ENCODE measurements at regions of chr1 and their contacts with region 1.

Region 1: GRCh38 chr1:243850452-243851256 is 611 bp upstream of the AKT3 start:
- DNase-seq: peak; percentile 59 to 61
- H3K4me3 ChIP-seq: peak overlapping the region; percentile 64
- H3K4me3 Mint-ChIP-seq: peak overlapping the region; percentile 83
- H3K27ac Mint-ChIP-seq: no peak overlapping the region
- H3K4me1 ChIP-seq: 0 out of 2 replicates have a peak, but pooled peaks cover 10% of the 10 kb centered on the region
- H3K4me1 Mint-ChIP-seq: no peaks in the 10 kb centered on the region
- H3K27me3 ChIP-seq: peaks cover 2% of the 10 kb centered on the region
- H3K27me3 Mint-ChIP-seq: peaks cover 12% of the 10 kb centered on the region
- CTCF ChIP-seq: no peak

Region 2: DNA sequence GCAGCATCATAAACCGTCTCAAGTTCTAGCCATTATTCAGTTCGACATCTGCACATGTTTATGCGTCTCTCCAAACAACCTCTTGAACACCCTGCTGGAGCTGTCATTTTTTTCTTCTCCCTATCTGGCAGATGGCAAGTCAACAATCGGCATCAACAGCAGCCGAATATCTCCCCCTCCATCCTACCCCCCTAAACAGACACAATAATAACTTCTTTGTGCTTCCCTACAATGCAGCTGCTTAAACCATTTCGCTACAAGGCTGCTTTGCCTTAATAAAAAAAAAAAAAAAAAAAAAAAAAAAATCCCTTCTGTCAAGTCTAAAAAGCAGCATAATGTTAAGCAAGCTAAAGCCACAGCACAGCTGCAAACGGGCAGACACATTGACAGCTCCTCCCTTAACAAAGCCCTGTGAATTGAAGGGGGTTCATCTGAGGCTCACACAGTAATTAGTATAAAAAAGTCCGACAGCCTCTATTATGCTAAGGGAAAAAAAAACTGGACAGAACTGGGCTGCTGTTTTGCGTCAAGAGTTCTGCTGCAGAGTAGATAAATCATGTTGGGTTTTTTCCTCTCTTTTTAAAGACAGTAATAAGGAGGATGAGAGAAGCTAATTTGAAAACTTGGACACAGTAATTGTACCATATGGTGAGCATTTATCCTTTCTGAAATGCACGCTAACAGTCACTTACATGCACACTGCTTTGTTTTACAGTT is 137.0 kb before region 1 on chr1:
- CTCF ChIA-PET with region 1: no interaction called
- POLR2A ChIA-PET with region 1: no interaction called
- intact Hi-C with region 1: no loop called
- DNase-seq: no peak
- H3K4me3 ChIP-seq: no peak overlapping the region
- H3K4me3 Mint-ChIP-seq: no peak overlapping the region
- H3K27ac Mint-ChIP-seq: no peak overlapping the region
- H3K4me1 ChIP-seq: no peaks in the 10 kb centered on the region
- H3K4me1 Mint-ChIP-seq: no peaks in the 10 kb centered on the region
- H3K27me3 ChIP-seq: no peaks in the 10 kb centered on the region
- H3K27me3 Mint-ChIP-seq: no peaks in the 10 kb centered on the region
- CTCF ChIP-seq: no peak

Region 3: DNA sequence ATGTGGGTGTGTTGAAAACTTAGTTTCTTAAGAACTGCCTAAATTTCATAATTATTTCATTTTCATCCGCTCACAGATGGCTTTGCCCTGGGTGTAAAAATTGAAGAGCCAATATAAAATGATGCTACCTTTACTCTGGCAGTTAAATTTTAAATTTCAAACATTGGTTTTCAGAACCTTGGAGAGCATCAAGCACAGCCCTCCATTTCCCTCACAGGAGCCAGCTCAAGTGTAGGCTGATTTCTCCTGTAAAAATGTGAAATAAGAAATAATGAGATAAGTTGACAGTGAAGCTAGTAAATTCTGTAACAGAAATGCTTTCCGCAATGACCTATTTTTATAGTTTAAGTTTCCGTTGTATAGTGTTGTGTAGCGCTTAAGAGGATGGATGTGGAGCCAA is 53.2 kb after region 1 on chr1:
- CTCF ChIA-PET with region 1: no interaction called
- POLR2A ChIA-PET with region 1: no interaction called
- intact Hi-C with region 1: loop called (anchors 1 kb)
- DNase-seq: peak in 1 of 2 experiments; percentile 24
- H3K4me3 ChIP-seq: no peak overlapping the region
- H3K4me3 Mint-ChIP-seq: no peak overlapping the region
- H3K27ac Mint-ChIP-seq: no peak overlapping the region
- H3K4me1 ChIP-seq: peaks cover 23% of the 10 kb centered on the region
- H3K4me1 Mint-ChIP-seq: peaks cover 19% of the 10 kb centered on the region
- H3K27me3 ChIP-seq: no peaks in the 10 kb centered on the region
- H3K27me3 Mint-ChIP-seq: no peaks in the 10 kb centered on the region
- CTCF ChIP-seq: no peak

Region 4: DNA sequence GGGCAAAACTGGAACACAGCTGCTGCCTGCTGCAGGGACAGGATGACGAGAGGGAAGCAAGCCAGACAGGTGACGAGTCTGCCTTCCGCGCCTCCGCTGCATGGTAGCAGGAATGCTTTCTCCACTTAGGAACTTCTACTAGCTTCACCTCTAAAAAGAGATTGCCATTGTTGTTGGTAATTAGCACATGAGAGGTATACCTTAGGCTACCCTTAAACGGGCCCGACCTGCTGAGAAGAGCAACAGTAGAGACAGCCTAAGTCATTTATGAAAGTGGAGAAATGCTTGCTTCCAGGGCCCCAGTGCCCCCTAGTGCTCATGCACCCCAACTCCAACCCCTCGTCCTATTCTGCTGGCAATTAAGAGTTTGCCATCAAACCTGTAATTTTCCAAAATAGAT is 96.3 kb after region 1 on chr1:
- CTCF ChIA-PET with region 1: no interaction called
- POLR2A ChIA-PET with region 1: no interaction called
- intact Hi-C with region 1: loop called (anchors 1 kb)
- DNase-seq: peak in 1 of 2 experiments; percentile 35
- H3K4me3 ChIP-seq: no peak overlapping the region
- H3K4me3 Mint-ChIP-seq: no peak overlapping the region
- H3K27ac Mint-ChIP-seq: no peak overlapping the region
- H3K4me1 ChIP-seq: peaks cover 35% of the 10 kb centered on the region
- H3K4me1 Mint-ChIP-seq: peaks cover 5% of the 10 kb centered on the region
- H3K27me3 ChIP-seq: no peaks in the 10 kb centered on the region
- H3K27me3 Mint-ChIP-seq: no peaks in the 10 kb centered on the region
- CTCF ChIP-seq: peak; percentile 12 to 29

Region 5: GRCh38 chr1:244047621-244048471 is 197.2 kb after region 1 on chr1:
- CTCF ChIA-PET with region 1: no interaction called
- POLR2A ChIA-PET with region 1: no interaction called
- intact Hi-C with region 1: loop called (anchors 10 kb)
- DNase-seq: peak; percentile 97 to 99
- H3K4me3 ChIP-seq: peak overlapping the region; percentile 96
- H3K4me3 Mint-ChIP-seq: peak overlapping the region; percentile 85
- H3K27ac Mint-ChIP-seq: peak overlapping the region; percentile 57
- H3K4me1 ChIP-seq: 0 out of 2 replicates have a peak, but pooled peaks cover 11% of the 10 kb centered on the region
- H3K4me1 Mint-ChIP-seq: no peaks in the 10 kb centered on the region
- H3K27me3 ChIP-seq: no peaks in the 10 kb centered on the region
- H3K27me3 Mint-ChIP-seq: peaks cover 10% of the 10 kb centered on the region
- CTCF ChIP-seq: no peak

Measured in Caco-2 (cell line).